PC-3 (cell line): ENCODE measurements at regions of chr17 and their contacts with region 1.

Region 1: DNA sequence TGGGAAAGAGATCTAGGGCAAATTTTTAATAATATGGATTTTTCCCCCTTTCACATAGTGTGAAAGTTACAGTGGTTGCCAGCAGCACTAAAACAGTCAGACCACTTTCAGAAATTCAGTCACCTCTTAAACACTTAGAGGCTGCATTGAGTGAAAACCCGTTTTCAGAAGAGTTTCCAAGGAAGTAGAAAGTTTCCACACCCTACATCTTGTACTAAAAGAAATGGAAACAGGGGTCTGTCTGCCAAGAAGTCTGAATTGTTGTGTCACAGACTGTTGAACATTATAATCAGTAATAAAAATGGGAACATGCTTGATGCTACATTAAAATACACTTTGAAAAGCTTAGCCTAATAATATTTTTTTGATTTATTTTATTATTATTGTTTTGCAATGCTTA is 278.9 kb upstream of the KCNJ16 start:
- DNase-seq: no peak
- ATAC-seq: no peak
- H3K4me3 ChIP-seq: no peak overlapping the region
- H3K27ac ChIP-seq: no peak overlapping the region
- H3K4me1 ChIP-seq: no peaks in the 10 kb centered on the region
- H3K27me3 ChIP-seq: no peaks in the 10 kb centered on the region
- CTCF ChIP-seq: no peak

Region 2: DNA sequence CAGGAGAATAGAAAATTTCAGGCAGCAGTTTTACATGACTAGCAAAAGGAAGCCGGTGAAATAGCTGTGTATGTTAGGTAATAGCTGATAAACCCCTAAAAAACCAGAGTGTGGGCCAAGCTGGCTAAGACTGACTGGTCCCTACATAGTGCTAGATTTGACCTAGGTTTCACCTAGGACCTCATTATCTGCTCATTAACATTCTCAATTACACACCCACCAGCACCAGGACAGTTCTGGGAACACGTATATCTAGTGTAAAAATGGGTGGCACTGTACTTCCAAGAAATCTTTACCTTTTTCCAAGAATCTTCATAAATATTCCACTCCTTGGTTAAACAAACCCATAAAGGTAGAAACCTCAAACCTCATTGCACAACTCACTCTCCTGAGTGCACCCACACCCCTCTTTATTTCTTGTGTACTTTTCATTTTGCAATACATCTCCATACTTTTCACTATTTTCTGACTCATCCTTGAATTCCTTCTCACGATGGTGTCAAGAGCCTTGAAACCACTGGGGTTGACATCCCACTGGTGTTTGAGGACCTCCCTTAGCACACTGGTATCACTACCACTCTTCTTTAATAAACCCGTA is 16.3 kb after region 1 on chr17:
- CTCF ChIA-PET with region 1: no interaction called
- POLR2A ChIA-PET with region 1: interaction called, 10 read pairs
- intact Hi-C with region 1: no loop called
- DNase-seq: peak; percentile 92
- ATAC-seq: peak; percentile 86
- H3K4me3 ChIP-seq: no peak overlapping the region
- H3K27ac ChIP-seq: peak overlapping the region; percentile 45
- H3K4me1 ChIP-seq: peaks cover 36% of the 10 kb centered on the region
- H3K27me3 ChIP-seq: no peaks in the 10 kb centered on the region
- CTCF ChIP-seq: no peak

Region 3: GRCh38 chr17:69945698-69946185 is 149.7 kb after region 1 on chr17:
- CTCF ChIA-PET with region 1: no interaction called
- POLR2A ChIA-PET with region 1: interaction called, 17 read pairs
- intact Hi-C with region 1: no loop called
- DNase-seq: no peak
- ATAC-seq: no peak
- H3K4me3 ChIP-seq: no peak overlapping the region
- H3K27ac ChIP-seq: no peak overlapping the region
- H3K4me1 ChIP-seq: no peaks in the 10 kb centered on the region
- H3K27me3 ChIP-seq: no peaks in the 10 kb centered on the region
- CTCF ChIP-seq: no peak